ENCODE measurements at regions of chr11 and their contacts with region 1.

Region 1: GRCh38 chr11:842370-843002 is at the starts of genes POLR2L and TSPAN4:
- DNase-seq: peak; percentile 97
- total RNA-seq, gene POLR2L: 63.9 to 91.4 TPM
- total RNA-seq, gene TSPAN4: 75.7 to 97.3 TPM

Region 2: GRCh38 chr11:765025-765801 is 77.3 kb before region 1 on chr11:
- intact Hi-C with region 1: no loop called
- DNase-seq: no peak

Region 3: DNA sequence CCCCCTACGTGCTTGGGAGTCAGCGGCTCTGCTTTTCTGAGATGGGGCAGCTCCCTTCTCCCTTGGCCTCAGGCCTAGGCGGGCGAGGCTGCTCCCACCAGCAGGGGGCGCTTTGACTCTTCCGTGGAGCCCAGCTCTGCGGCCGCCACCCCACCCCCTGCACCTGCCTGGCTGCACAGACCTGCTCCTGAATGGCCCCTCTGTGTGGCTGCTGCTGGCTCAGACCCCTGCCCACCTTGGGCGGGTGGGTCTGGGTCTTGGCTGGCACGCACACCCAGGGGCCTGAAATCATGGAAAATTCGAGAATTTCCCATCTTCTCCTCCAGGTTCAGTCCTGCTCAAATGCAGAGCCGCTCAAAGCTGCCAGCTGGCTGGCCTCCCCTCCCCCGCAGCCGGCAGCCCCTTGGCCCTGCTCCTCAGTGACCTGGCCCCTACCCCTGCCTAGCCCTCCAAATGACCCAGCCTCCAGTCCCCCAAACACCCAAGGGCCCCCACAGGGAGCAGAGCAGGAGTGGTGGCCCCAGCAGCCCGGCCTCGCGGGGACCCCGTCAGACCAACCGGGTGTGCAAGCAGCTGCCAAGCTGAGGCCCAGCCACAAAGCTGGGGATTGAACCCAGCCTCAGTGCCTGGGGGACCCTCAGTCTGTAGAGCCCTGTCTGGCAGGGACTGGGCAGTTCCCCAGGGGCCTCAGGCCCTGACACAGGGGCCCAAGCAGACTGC is 1040.2 kb after region 1 on chr11:
- intact Hi-C with region 1: loop called in 1 of 2 experiments (anchors 5 kb)
- DNase-seq: peak; percentile 95

Measured in posterior vena cava (tissue), 2 donors.